ENCODE measurements at regions of chr22 and their contacts with region 1.

Region 1: DNA sequence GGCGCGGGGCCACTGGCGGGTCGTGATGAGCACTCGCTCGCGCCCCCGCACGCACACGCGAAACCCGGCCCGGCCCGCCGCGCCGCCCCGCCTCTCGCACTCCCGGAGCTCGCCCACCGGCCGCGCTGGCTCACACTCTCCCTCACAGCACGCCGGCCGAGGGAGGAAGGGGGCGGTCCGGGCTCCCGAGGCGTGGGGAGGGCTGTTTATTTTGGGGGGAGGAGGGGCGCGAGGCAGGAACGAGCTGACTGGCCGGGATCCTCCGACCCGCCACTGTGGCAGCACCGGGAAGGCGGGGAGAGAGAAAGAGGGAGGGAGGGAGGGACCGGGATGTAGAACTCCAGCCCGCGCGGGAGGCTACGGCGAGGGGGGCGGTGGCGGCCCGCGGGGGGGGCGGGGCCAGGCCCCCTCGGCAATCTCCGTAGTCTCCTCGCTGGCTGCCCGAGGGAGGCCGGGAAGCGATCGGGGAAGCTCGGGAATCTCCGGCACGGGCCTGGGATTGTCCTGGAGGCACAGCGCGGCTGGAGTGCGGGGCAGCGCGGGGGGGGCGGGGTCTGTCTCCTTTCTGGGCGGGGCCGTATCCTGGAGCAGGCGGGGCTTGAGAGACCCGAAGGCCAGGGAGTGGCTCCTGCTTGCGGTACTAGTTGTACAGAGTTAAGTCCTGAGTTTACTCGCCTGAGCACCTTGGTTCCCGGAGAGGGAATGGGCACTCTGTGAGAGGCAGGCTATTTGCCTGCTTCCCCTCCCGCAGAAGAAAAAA is at the start of gene RBFOX2:
- DNase-seq: peak; percentile 91
- ATAC-seq: peak; percentile 88
- H3K4me3 ChIP-seq: peak within 1 kb of the TSS; percentile 99
- H3K27ac ChIP-seq: no peak within 1 kb of the TSS
- H3K4me1 ChIP-seq: 0 out of 2 replicates have a peak, but pooled peaks cover 13% of the 10 kb centered on the region
- H3K27me3 ChIP-seq: no peaks in the 10 kb centered on the region
- CTCF ChIP-seq: no peak
- total RNA-seq, gene RBFOX2: 75.1 and 82.5 TPM in 2 replicates

Region 2: GRCh38 chr22:35971456-35972119 is 57.2 kb before region 1 on chr22:
- CTCF ChIA-PET with region 1: no interaction called
- POLR2A ChIA-PET with region 1: no interaction called
- intact Hi-C with region 1: no loop called
- DNase-seq: no peak
- ATAC-seq: no peak; the same call in 1 of the 2 replicates
- H3K4me3 ChIP-seq: no peak overlapping the region
- H3K27ac ChIP-seq: no peak overlapping the region
- H3K4me1 ChIP-seq: peaks cover 35% of the 10 kb centered on the region
- H3K27me3 ChIP-seq: no peaks in the 10 kb centered on the region
- CTCF ChIP-seq: no peak

Region 3: GRCh38 chr22:36065775-36066559 is 37.1 kb after region 1 on chr22:
- CTCF ChIA-PET with region 1: interaction called, 10 read pairs
- POLR2A ChIA-PET with region 1: no interaction called
- intact Hi-C with region 1: no loop called
- DNase-seq: peak; percentile 90
- ATAC-seq: peak; percentile 85
- H3K4me3 ChIP-seq: peak overlapping the region; percentile 78
- H3K27ac ChIP-seq: no peak overlapping the region
- H3K4me1 ChIP-seq: peaks cover 6% of the 10 kb centered on the region
- H3K27me3 ChIP-seq: no peaks in the 10 kb centered on the region
- CTCF ChIP-seq: peak; percentile 99